CD4-positive, alpha-beta T cell (primary cell): ENCODE measurements at regions of chr4 and their contacts with region 1.

Region 1: DNA sequence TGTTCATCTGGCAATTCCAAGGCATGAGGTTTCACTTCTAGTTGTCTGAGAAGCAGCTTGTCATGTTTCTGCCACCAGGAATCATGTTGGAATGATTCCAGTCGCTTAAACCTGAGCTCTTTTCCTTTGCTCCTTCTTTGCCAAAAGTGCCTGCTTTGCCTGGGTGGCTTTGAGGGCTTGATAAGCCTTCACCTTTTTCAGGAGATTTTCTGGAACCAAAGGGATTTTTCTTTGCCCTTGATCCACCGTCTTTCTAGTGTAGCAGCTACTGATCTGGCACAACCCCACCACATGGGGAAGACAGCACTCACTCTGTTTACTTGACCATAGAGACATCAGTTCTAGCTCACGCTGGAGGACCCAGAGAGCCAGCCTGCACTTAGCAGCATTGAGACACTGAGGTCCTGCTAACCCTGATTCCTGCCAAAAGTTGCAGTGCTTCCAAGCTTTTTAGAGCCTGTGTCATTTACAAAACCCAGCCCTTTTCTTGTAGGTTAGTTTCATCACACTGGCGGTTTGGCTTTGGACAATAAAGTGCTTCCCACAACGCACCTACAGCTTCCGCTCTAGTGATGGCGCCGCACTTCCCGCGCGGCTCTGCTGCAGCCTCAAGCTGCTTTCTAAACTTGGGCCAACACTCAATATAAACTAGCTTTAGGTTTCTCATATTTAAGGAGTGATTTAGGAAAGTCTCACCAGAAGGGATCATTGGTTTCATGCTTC is 7.3 kb upstream of the CCNI start:
- DNase-seq: no peak
- ATAC-seq: no peak
- H3K4me3 ChIP-seq: no peak overlapping the region
- H3K4me3 Mint-ChIP-seq: no peak overlapping the region
- H3K27ac ChIP-seq: no peak overlapping the region
- H3K27ac Mint-ChIP-seq: no peak overlapping the region
- H3K4me1 ChIP-seq: peaks cover 5% of the 10 kb centered on the region
- H3K4me1 Mint-ChIP-seq: peaks cover 25% of the 10 kb centered on the region
- H3K27me3 ChIP-seq: no peaks in the 10 kb centered on the region
- H3K27me3 Mint-ChIP-seq: no peaks in the 10 kb centered on the region
- CTCF ChIP-seq: no peak

Region 2: GRCh38 chr4:76156635-76157034 is 926.4 kb before region 1 on chr4:
- CTCF ChIA-PET with region 1: no interaction called
- POLR2A ChIA-PET with region 1: no interaction called
- intact Hi-C with region 1: loop called in 1 of 2 experiments (anchors 10 kb)
- DNase-seq: no peak
- ATAC-seq: no peak
- H3K4me3 ChIP-seq: no peak overlapping the region
- H3K4me3 Mint-ChIP-seq: no peak overlapping the region
- H3K27ac ChIP-seq: no peak overlapping the region
- H3K27ac Mint-ChIP-seq: no peak overlapping the region
- H3K4me1 ChIP-seq: no peaks in the 10 kb centered on the region
- H3K4me1 Mint-ChIP-seq: no peaks in the 10 kb centered on the region
- H3K27me3 ChIP-seq: no peaks in the 10 kb centered on the region
- H3K27me3 Mint-ChIP-seq: no peaks in the 10 kb centered on the region
- CTCF ChIP-seq: no peak